ENCODE measurements at regions of chr6 and their contacts with region 1.

Region 1: GRCh38 chr6:157314705-157315321 is 8.5 kb downstream of the TMEM242 start:
- DNase-seq: no peak
- ATAC-seq: peak; percentile 67

Region 2: DNA sequence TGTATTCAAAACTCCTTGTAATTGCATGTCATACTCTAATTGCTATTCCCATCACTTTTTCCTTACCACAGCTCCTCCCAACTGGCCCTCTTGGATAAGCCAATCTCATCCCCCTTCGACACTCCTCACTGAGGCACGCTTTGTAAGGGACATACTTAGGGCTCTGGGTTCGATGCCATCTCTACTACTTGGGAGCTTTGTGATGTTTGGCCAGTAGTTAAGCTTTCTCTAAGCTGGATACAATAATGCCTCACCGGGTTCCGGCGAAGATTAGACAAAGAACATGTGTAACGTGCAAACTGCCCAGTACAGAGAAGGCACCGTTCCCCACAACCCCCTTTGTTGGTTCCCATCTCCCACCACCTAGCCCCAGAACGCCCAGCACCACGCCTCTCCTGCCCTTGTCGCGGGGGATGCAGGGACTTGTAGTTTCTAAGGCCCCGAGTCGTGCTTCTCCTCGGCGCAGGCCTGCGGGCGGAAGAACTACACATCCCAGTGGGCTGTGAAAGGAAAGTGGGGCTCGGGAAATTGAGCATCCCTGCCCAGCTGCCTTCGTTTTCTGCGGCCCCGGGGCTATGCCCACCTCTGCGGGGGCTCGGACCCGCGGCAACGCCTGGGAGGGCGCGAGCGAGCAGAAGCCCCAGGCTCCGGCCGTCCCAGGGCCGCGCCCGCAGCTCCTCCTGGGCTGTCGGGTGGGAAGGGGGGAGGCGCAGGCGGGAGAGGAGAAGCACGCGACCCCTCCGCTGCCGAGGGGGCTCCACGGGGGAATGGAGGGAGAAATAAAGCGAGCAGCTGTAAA is 65.0 kb after region 1 on chr6:
- intact Hi-C with region 1: no loop called
- DNase-seq: peak; percentile 95
- ATAC-seq: peak; percentile 94

Region 3: GRCh38 chr6:157597446-157598312 is 282.9 kb after region 1 on chr6:
- intact Hi-C with region 1: loop called (anchors 5 kb)
- DNase-seq: no peak
- ATAC-seq: peak; percentile 59

Region 4: GRCh38 chr6:157667211-157668008 is 352.6 kb after region 1 on chr6:
- intact Hi-C with region 1: loop called (anchors 1 kb)
- DNase-seq: no peak
- ATAC-seq: no peak

Measured in Right ventricle myocardium inferior (tissue), 1 donor.